H1 (cell line): ENCODE measurements at regions of chr22 and their contacts with region 1.

Region 1: GRCh38 chr22:35037089-35037488 is 28.9 kb upstream of the ISX start:
- DNase-seq: peak in 1 of 2 experiments; percentile 64
- H3K4me3 ChIP-seq: no peak overlapping the region
- H3K27ac ChIP-seq: no peak overlapping the region
- H3K4me1 ChIP-seq: no peaks in the 10 kb centered on the region; a peak in 1 of 7 replicates
- H3K27me3 ChIP-seq: no peaks in the 10 kb centered on the region
- CTCF ChIP-seq: peak; percentile 45 to 87 (median 77)
- EP300 ChIP-seq: no peak
- POLR2A ChIP-seq: no peak
- RAD21 ChIP-seq: peak; percentile 85 to 90

Region 2: GRCh38 chr22:34878996-34879395 is 158.1 kb before region 1 on chr22:
- CTCF ChIA-PET with region 1: no interaction called
- POLR2A ChIA-PET with region 1: no interaction called
- DNase-seq: no peak
- H3K4me3 ChIP-seq: no peak overlapping the region
- H3K27ac ChIP-seq: no peak overlapping the region
- H3K4me1 ChIP-seq: no peaks in the 10 kb centered on the region
- H3K27me3 ChIP-seq: 0 out of 7 replicates have a peak, but pooled peaks cover 0 to 2% (median 0%) of the 10 kb centered on the region in 4 experiments
- CTCF ChIP-seq: no peak
- EP300 ChIP-seq: no peak
- POLR2A ChIP-seq: no peak
- RAD21 ChIP-seq: no peak

Region 3: GRCh38 chr22:34966980-34967565 is 70.0 kb before region 1 on chr22:
- CTCF ChIA-PET with region 1: no interaction called
- POLR2A ChIA-PET with region 1: no interaction called
- DNase-seq: no peak
- H3K4me3 ChIP-seq: no peak overlapping the region
- H3K27ac ChIP-seq: no peak overlapping the region
- H3K4me1 ChIP-seq: peaks cover 0 to 5% (median 1%) of the 10 kb centered on the region in 4 experiments; a peak in 2 of 7 replicates
- H3K27me3 ChIP-seq: no peaks in the 10 kb centered on the region
- CTCF ChIP-seq: no peak
- EP300 ChIP-seq: no peak
- POLR2A ChIP-seq: no peak
- RAD21 ChIP-seq: no peak

Region 4: DNA sequence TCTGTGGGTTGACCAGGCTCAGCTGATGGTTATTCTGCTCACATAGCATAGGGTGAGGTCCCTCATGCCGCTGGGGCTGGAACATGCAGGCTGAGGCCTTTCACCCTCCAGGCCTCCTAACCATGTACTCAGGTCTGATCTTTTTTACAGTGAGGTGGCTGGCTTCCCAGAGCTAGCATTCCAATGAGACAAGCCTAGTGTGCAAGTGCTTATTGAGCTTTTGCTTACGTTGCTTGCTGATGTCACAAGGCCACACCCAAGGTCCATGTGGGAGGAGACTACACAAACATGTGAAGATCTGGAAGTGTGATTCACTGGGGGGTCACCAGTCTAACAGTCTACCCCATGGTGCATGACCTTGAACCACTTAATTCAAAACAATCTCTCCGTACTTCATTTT is 62.8 kb after region 1 on chr22:
- CTCF ChIA-PET with region 1: no interaction called
- POLR2A ChIA-PET with region 1: no interaction called
- DNase-seq: no peak
- H3K4me3 ChIP-seq: no peak overlapping the region
- H3K27ac ChIP-seq: no peak overlapping the region
- H3K4me1 ChIP-seq: no peaks in the 10 kb centered on the region
- H3K27me3 ChIP-seq: no peaks in the 10 kb centered on the region; a peak in 2 of 7 replicates
- CTCF ChIP-seq: no peak
- EP300 ChIP-seq: no peak
- POLR2A ChIP-seq: no peak
- RAD21 ChIP-seq: no peak

Region 5: DNA sequence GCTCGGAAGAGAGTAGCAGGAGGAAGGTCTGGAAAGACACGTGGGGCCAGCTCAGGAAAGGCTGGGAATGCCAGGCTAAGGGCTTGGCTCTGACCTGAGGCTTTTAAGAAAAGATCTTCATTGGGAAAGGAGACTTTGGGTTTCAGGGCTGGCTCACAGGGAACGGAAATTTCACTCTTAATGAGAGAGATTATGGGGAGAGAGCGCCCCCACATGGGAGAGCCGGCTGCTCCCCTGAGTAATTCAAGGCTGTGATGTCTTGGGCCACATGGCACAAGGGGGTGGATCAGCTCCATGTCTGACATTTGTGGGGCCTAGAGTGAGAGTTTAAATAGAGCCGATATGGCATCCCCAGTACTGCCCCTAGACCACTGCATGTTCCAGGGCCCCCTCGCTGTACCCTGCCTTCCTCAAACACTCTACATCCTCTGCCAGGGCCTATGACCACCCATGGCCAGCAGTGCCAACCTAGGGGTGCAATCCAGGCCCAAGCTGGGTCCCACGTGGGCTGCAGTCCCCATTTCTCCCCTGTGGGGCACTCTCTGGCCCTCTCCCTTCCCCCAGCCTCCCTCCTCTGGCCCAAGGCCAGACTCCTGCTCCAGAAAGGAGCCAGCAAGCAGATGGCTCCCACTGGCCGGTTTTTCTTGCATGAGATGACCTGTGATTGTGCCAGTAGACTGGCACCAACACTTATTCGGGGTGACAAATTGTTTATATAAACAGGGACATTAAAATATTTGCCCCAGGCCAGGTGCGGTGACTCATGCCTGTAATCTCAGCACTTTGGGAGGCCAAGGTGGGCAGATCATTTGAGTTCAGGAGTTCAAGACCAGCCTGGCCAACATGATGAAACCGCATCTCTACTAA is 104.0 kb after region 1 on chr22:
- CTCF ChIA-PET with region 1: interaction called, 18 read pairs
- POLR2A ChIA-PET with region 1: no interaction called
- DNase-seq: peak; percentile 51 to 88
- H3K4me3 ChIP-seq: no peak overlapping the region
- H3K27ac ChIP-seq: no peak overlapping the region
- H3K4me1 ChIP-seq: no peaks in the 10 kb centered on the region
- H3K27me3 ChIP-seq: no peaks in the 10 kb centered on the region
- CTCF ChIP-seq: peak; percentile 75 to 81 (median 76)
- EP300 ChIP-seq: no peak
- POLR2A ChIP-seq: no peak
- RAD21 ChIP-seq: peak; percentile 88 to 92